Tibial artery (tissue), 4 donors: ENCODE measurements at regions of chr3 and their contacts with region 1.

Region 1: DNA sequence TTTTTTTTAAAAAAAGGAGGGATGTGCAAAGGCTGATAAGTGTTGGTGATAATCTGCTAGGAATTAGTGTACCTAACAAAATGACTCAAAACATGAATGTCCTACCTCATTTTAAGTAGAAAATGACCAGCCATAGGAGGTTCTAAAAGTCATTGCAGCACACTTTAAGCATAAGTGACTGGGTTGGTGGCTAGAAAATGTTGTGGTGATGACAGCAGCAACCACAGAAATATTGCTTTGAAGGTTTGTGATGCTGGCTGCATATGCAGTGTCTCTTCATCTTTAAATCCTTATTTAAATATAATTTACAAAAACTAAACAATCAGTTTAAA is 55.2 kb downstream of the CMSS1 start:
- DNase-seq: no peak
- H3K4me3 ChIP-seq: peak overlapping the region; percentile 74 to 87
- H3K27ac ChIP-seq: peak overlapping the region; percentile 96 to 97
- H3K4me1 ChIP-seq: peaks cover 0 to 57% (median 27%) of the 10 kb centered on the region in 4 donors
- H3K27me3 ChIP-seq: no peaks in the 10 kb centered on the region
- CTCF ChIP-seq: no peak

Region 2: GRCh38 chr3:99925584-99926212 is 52.8 kb after region 1 on chr3:
- intact Hi-C with region 1: loop called (anchors 2 kb)
- DNase-seq: peak; percentile 39 to 76
- H3K4me3 ChIP-seq: no peak overlapping the region
- H3K27ac ChIP-seq: peak overlapping the region; percentile 72 to 75
- H3K4me1 ChIP-seq: peaks cover 0 to 78% (median 33%) of the 10 kb centered on the region in 4 donors
- H3K27me3 ChIP-seq: no peaks in the 10 kb centered on the region
- CTCF ChIP-seq: no peak